MCF 10A (cell line): ENCODE measurements at regions of chr12 and their contacts with region 1.

Region 1: DNA sequence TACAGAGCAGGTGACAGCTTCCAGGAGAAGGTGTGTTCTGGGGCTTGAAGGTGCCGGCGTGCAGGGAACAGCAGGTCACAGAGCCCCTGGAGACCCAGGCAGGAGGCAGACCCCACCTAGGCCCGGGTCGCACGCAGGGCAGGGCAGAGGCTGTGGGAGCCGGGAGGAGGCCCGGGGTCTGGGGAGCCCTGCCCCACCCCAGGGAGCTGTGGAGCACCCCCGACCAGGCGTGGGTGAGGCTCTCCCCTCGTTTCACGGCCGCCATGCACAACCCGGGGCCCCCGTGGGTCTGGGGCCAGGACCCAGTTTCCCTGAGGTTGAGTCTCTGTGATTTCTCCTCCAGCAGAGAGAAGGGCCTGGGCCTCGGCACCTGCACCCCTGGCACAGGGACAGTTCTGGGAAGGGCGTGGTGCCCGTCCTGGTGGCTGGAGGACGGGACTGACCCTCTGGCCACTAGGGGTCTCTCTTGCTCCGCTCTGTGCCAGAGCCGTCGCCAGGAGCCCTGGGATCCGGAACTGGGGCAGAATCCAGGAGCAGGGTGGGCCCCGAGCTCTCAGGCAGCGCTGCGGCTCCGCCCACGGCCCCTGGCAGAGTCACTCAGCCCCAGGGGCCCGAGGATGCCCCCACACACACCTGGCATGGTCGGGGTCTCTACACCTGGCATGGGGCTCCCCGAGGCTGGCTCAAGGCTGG is 75.2 kb upstream of the FBRSL1 start:
- DNase-seq: peak; percentile 82
- H3K4me3 Mint-ChIP-seq: no peak overlapping the region
- H3K27ac Mint-ChIP-seq: no peak overlapping the region
- H3K4me1 Mint-ChIP-seq: no peaks in the 10 kb centered on the region
- H3K27me3 Mint-ChIP-seq: peaks cover 25% of the 10 kb centered on the region
- CTCF ChIP-seq: peak; percentile 90

Region 2: GRCh38 chr12:132162508-132163031 is 252.2 kb before region 1 on chr12:
- CTCF ChIA-PET with region 1: interaction called, 22 read pairs
- POLR2A ChIA-PET with region 1: no interaction called
- intact Hi-C with region 1: no loop called
- DNase-seq: peak; percentile 89
- H3K4me3 Mint-ChIP-seq: peak overlapping the region; percentile 49
- H3K27ac Mint-ChIP-seq: peak overlapping the region; percentile 68
- H3K4me1 Mint-ChIP-seq: peaks cover 21% of the 10 kb centered on the region
- H3K27me3 Mint-ChIP-seq: peaks cover 11% of the 10 kb centered on the region
- CTCF ChIP-seq: peak; percentile 15

Region 3: GRCh38 chr12:132523576-132524331 is 109.0 kb after region 1 on chr12:
- CTCF ChIA-PET with region 1: interaction called, 11 read pairs
- POLR2A ChIA-PET with region 1: no interaction called
- intact Hi-C with region 1: loop called (anchors 2 kb)
- DNase-seq: peak; percentile 66
- H3K4me3 Mint-ChIP-seq: peak overlapping the region; percentile 53
- H3K27ac Mint-ChIP-seq: no peak overlapping the region
- H3K4me1 Mint-ChIP-seq: peaks cover 6% of the 10 kb centered on the region
- H3K27me3 Mint-ChIP-seq: no peaks in the 10 kb centered on the region
- CTCF ChIP-seq: peak; percentile 59

Region 4: GRCh38 chr12:132614861-132615578 is 200.2 kb after region 1 on chr12:
- CTCF ChIA-PET with region 1: interaction called, 32 read pairs
- POLR2A ChIA-PET with region 1: interaction called, 3 read pairs
- intact Hi-C with region 1: loop called (anchors 1 kb)
- DNase-seq: peak; percentile 84
- H3K4me3 Mint-ChIP-seq: no peak overlapping the region
- H3K27ac Mint-ChIP-seq: no peak overlapping the region
- H3K4me1 Mint-ChIP-seq: peaks cover 6% of the 10 kb centered on the region
- H3K27me3 Mint-ChIP-seq: peaks cover 54% of the 10 kb centered on the region
- CTCF ChIP-seq: peak; percentile 89

Region 5: DNA sequence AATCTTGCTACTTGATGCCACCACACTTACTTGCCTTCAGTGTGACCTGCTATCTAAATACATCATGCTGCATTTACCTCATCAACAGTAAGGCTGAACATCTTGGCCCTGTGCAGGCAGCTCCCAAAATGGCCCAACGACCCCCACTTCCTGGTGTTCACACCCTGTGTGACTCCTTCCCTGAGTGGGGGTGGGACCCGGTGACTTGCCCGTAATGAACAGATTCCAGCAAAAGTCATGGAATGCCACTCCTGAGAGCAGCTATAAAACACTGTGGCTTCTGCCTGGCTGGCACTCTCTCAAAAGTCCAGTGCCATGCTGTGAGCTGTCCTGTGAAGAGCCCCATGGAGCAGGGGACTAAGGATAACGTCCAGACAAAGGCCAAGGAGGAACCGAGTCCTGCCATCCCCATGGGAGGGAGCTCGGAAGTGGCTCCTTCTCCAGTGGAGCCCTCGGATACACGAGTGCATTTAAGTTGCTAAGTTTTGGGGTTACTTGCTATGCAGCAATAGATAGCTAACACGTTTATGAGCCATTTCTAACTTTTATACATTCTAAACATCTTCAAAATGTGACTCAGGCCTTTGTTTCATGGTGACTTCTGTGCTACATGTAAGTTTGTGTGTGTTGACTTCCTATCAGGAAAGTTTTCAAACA is 236.8 kb after region 1 on chr12:
- CTCF ChIA-PET with region 1: no interaction called
- POLR2A ChIA-PET with region 1: no interaction called
- intact Hi-C with region 1: no loop called
- DNase-seq: no peak
- H3K4me3 Mint-ChIP-seq: no peak overlapping the region
- H3K27ac Mint-ChIP-seq: no peak overlapping the region
- H3K4me1 Mint-ChIP-seq: no peaks in the 10 kb centered on the region
- H3K27me3 Mint-ChIP-seq: no peaks in the 10 kb centered on the region
- CTCF ChIP-seq: no peak